MCF 10A (cell line): ENCODE measurements at regions of chr4 and their contacts with region 1.

Region 1: GRCh38 chr4:68175562-68176155 is 46.0 kb upstream of the TMPRSS11F start:
- DNase-seq: peak; percentile 81
- H3K4me3 Mint-ChIP-seq: no peak overlapping the region
- H3K27ac Mint-ChIP-seq: no peak overlapping the region
- H3K4me1 Mint-ChIP-seq: peaks cover 1% of the 10 kb centered on the region
- H3K27me3 Mint-ChIP-seq: no peaks in the 10 kb centered on the region
- CTCF ChIP-seq: peak; percentile 50

Region 2: DNA sequence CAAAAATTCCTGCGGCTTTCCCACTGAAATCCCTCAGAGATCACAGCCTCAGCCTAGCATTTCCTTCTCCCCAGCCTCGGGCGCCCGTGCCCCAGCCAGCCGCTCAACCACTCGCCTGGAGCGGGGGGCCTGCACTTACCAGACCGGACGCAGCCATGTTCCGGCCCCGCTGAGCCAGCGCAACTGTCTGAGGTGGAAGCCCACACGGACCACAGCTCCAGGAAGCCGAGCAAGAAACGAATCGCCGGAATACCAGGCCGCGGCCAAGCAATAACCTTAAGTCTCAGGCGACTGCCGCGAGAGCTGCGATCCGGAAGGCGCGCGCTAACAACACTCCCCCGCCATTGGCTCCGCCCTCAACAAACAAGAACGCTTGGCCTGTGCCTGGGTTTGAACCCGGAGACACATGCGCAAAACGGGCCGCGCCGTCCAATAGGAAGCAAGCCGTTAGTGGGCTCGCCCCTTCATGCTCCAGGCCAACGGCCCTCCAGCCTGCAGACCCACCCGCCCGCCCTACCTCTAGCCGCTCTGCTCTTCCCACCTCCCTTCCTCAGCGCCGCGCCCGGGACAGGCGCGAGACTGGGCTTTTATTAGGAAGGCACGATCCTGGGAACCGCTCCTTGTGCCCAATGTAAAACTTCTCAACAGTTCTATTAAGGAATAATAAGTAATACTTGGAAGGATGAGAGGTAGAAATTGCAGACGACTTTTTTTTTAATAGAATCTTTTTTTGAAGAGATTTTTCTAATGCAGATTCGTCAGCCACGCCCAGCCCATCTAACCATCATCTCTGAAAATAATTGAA is 630.3 kb before region 1 on chr4 and contains the start of gene CENPC:
- CTCF ChIA-PET with region 1: no interaction called
- POLR2A ChIA-PET with region 1: no interaction called
- intact Hi-C with region 1: loop called (anchors 10 kb)
- DNase-seq: peak; percentile 98
- H3K4me3 Mint-ChIP-seq: peak within 1 kb of the TSS; percentile 94
- H3K27ac Mint-ChIP-seq: peak within 1 kb of the TSS; percentile 99
- H3K4me1 Mint-ChIP-seq: peaks cover 23% of the 10 kb centered on the region
- H3K27me3 Mint-ChIP-seq: no peaks in the 10 kb centered on the region
- CTCF ChIP-seq: no peak
- total RNA-seq, gene CENPC: 17.7 and 19.0 TPM in 2 replicates

Region 3: GRCh38 chr4:67746797-67747495 is 428.7 kb before region 1 on chr4:
- CTCF ChIA-PET with region 1: interaction called, 5 read pairs
- POLR2A ChIA-PET with region 1: no interaction called
- intact Hi-C with region 1: loop called (anchors 10 kb)
- DNase-seq: peak; percentile 39
- H3K4me3 Mint-ChIP-seq: no peak overlapping the region
- H3K27ac Mint-ChIP-seq: no peak overlapping the region
- H3K4me1 Mint-ChIP-seq: peaks cover 10% of the 10 kb centered on the region
- H3K27me3 Mint-ChIP-seq: no peaks in the 10 kb centered on the region
- CTCF ChIP-seq: peak; percentile 48

Region 4: DNA sequence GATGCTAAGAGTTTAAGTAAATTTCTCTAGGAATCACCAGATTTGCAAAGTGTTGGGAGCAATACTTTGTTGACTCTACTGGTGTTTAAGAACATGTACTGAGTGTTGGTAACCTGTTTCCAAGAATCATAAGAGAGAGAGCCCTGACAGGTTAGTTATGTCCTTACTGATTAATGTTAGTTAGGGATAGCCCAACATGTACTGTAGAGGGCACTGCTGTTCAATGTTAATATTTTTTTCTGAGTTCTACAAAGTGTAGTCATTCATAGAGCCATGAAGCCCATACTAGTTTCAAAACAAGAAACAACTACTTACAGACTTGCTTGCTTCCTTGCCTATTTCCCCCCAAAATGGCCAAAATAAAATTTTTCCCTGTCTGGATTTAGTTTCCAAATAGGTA is 303.8 kb before region 1 on chr4:
- CTCF ChIA-PET with region 1: interaction called, 6 read pairs
- POLR2A ChIA-PET with region 1: no interaction called
- intact Hi-C with region 1: loop called (anchors 1 kb)
- DNase-seq: peak; percentile 55
- H3K4me3 Mint-ChIP-seq: no peak overlapping the region
- H3K27ac Mint-ChIP-seq: no peak overlapping the region
- H3K4me1 Mint-ChIP-seq: peaks cover 4% of the 10 kb centered on the region
- H3K27me3 Mint-ChIP-seq: no peaks in the 10 kb centered on the region
- CTCF ChIP-seq: peak; percentile 55

Region 5: DNA sequence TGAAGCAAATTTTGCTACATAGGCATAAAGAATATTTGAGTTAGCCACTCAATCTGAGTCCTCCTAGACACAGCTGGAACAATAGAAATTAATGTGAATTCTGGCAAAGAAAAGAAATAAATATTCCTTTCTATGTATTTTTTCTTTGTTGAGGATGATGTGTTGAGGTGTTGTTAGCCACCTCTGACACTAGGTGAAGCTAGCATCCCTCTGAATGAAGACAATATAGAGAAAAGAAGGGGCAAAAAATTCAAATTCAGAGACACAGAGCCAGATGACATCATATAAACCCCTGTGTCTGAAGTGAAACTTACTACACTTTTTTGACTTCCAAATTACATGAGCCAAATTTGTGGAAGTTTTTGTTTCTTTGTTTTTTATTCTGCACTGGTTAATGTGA is 257.2 kb before region 1 on chr4:
- CTCF ChIA-PET with region 1: interaction called, 12 read pairs
- POLR2A ChIA-PET with region 1: no interaction called
- intact Hi-C with region 1: loop called (anchors 1 kb)
- DNase-seq: peak; percentile 28
- H3K4me3 Mint-ChIP-seq: no peak overlapping the region
- H3K27ac Mint-ChIP-seq: no peak overlapping the region
- H3K4me1 Mint-ChIP-seq: peaks cover 5% of the 10 kb centered on the region
- H3K27me3 Mint-ChIP-seq: no peaks in the 10 kb centered on the region
- CTCF ChIP-seq: peak; percentile 61

Region 6: DNA sequence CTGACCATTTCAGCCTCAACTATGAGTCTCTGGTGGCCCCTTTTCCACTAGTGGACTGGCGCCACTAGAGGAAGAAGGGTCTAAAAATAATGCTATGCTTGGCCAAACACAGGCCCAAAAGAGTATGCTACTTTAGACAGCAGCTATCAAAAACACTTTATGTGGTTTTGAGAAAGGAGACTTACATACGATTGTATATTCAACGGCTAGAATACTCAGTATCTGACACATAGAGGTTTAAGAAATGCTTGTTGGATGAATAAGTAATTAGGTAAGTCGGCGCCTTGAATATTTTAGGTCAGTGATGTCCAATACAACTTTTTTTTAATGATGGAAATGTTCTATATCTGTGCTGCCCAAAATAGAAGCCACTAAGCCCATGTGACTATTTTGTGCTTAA is 186.7 kb before region 1 on chr4:
- CTCF ChIA-PET with region 1: interaction called, 86 read pairs
- POLR2A ChIA-PET with region 1: no interaction called
- intact Hi-C with region 1: loop called (anchors 1 kb)
- DNase-seq: no peak
- H3K4me3 Mint-ChIP-seq: no peak overlapping the region
- H3K27ac Mint-ChIP-seq: no peak overlapping the region
- H3K4me1 Mint-ChIP-seq: no peaks in the 10 kb centered on the region
- H3K27me3 Mint-ChIP-seq: no peaks in the 10 kb centered on the region
- CTCF ChIP-seq: no peak

Region 7: DNA sequence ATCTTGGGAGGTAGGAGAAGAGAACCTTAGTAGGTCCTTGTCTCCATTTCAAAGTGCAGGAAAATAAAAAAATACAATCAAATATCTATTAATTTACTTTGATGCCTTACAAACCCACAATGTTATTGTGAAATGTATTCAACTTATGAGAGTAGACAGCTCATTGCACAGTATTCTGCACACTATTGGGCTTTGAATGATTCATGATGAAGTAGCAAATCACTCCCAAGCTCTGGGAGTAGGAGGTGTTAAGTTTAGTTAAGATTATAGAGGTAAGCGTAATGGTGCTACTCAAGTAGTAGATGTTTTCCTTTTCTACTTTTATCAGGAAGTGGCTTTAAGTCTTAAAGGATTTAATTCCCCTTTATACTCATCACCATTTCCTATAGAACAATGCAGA is 179.5 kb before region 1 on chr4:
- CTCF ChIA-PET with region 1: interaction called, 13 read pairs
- POLR2A ChIA-PET with region 1: no interaction called
- intact Hi-C with region 1: no loop called
- DNase-seq: no peak
- H3K4me3 Mint-ChIP-seq: no peak overlapping the region
- H3K27ac Mint-ChIP-seq: no peak overlapping the region
- H3K4me1 Mint-ChIP-seq: no peaks in the 10 kb centered on the region
- H3K27me3 Mint-ChIP-seq: no peaks in the 10 kb centered on the region
- CTCF ChIP-seq: no peak

Region 8: DNA sequence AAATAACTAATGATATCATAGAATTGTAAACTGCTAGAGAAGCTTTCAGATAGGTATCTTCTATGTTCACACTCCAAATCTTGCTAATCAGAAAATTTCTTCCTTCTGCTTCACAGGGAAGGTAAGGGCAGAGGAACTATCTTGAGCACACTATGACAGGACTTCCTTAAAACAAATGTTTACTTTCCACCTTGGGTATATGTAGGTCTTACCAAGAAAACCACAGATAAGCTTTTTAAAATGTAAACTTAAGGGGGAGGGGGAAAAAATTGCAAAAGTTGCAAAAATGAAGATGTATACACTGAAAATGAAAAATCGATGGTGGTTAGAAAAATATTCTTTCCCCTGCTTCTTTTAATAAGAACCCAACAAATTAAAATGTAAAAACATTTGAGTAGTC is 143.4 kb after region 1 on chr4:
- CTCF ChIA-PET with region 1: no interaction called
- POLR2A ChIA-PET with region 1: no interaction called
- intact Hi-C with region 1: no loop called
- DNase-seq: no peak
- H3K4me3 Mint-ChIP-seq: no peak overlapping the region
- H3K27ac Mint-ChIP-seq: no peak overlapping the region
- H3K4me1 Mint-ChIP-seq: no peaks in the 10 kb centered on the region
- H3K27me3 Mint-ChIP-seq: no peaks in the 10 kb centered on the region
- CTCF ChIP-seq: no peak